ENCODE measurements at regions of chr3 and their contacts with region 1.

Region 1: GRCh38 chr3:132695422-132695821 is 26.8 kb downstream of the NPHP3 start:
- DNase-seq: no peak
- ATAC-seq: no peak
- H3K4me3 ChIP-seq: no peak overlapping the region
- H3K27ac ChIP-seq: no peak overlapping the region
- H3K4me1 ChIP-seq: no peaks in the 10 kb centered on the region
- H3K27me3 ChIP-seq: no peaks in the 10 kb centered on the region
- CTCF ChIP-seq: no peak

Region 2: GRCh38 chr3:132507657-132508056 is 187.8 kb before region 1 on chr3:
- intact Hi-C with region 1: loop called (anchors 10 kb)
- DNase-seq: no peak
- ATAC-seq: no peak
- H3K4me3 ChIP-seq: no peak overlapping the region
- H3K27ac ChIP-seq: no peak overlapping the region
- H3K4me1 ChIP-seq: no peaks in the 10 kb centered on the region
- H3K27me3 ChIP-seq: no peaks in the 10 kb centered on the region
- CTCF ChIP-seq: no peak

Region 3: DNA sequence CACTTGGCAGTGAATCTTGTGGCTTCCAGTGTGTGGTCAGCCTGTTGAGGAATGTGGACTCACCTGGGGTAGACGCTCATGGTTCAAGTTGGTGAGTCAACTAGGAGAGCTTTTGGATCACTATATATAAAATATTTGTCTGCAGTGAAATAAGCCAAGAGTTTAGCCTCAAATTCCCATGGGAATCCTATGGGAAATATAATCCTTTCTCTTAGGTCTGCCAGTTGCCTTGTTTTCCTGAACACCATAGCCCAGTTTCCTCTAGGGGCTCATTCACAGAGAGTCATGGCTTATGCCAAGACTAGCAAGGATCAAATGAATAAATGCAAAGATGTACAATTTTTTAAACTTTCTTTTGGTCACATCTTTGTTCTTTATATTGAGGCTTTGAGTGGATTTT is 126.8 kb after region 1 on chr3:
- intact Hi-C with region 1: no loop called
- DNase-seq: no peak
- ATAC-seq: no peak
- H3K4me3 ChIP-seq: no peak overlapping the region
- H3K27ac ChIP-seq: no peak overlapping the region
- H3K4me1 ChIP-seq: no peaks in the 10 kb centered on the region
- H3K27me3 ChIP-seq: no peaks in the 10 kb centered on the region
- CTCF ChIP-seq: no peak

Region 4: DNA sequence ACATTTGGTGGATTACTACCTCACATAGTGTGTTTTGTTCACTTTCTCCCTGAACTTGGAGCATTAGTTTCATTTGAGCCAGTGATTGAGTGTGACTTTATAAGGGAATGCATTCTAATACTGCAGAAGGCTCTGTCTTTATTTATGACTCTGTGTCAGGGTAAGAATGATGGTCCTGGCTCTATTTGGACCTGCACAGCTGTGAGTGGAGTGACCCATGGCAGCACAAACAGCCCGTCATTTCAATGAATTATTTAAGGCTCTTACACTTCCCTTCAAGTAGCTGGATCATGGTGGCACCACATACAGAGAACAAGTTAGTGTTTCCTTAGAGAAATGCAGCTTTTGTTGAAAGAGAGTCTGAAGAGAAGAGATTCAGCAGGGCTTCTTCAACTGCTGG is 359.1 kb after region 1 on chr3:
- intact Hi-C with region 1: no loop called
- DNase-seq: no peak
- ATAC-seq: no peak
- H3K4me3 ChIP-seq: no peak overlapping the region
- H3K27ac ChIP-seq: no peak overlapping the region
- H3K4me1 ChIP-seq: no peaks in the 10 kb centered on the region
- H3K27me3 ChIP-seq: no peaks in the 10 kb centered on the region
- CTCF ChIP-seq: no peak